PC-9 (cell line): ENCODE measurements at regions of chr13 and their contacts with region 1.

Region 1: DNA sequence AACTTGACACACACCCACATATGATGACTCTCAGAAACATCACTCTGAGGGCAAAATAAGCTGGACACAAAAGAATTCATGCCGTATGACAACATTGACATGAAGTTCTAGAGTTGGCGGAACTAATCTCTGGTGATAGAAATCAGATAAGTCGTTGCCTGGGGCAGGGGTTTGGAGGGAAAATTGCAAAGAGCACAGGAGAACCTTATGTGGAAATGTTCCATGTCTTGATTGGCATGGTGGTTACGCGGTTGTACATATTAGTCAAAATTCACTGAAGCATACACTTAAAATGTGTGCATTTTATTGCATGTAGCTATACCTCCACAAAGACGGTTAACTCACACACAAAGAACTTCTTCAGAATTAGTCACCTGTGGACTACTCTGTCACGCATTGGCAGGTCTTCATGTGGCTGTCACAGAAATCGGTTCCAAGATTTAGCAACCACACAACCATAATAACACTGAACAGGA is 137.8 kb upstream of the GJB6 start:
- DNase-seq: peak in 1 of 2 experiments; percentile 38
- H3K4me3 ChIP-seq: no peak overlapping the region; the same call in 1 of the 2 replicates
- H3K27ac ChIP-seq: peak overlapping the region; percentile 90
- H3K4me1 ChIP-seq: peaks cover 35% of the 10 kb centered on the region
- H3K27me3 ChIP-seq: no peaks in the 10 kb centered on the region
- CTCF ChIP-seq: no peak

Region 2: GRCh38 chr13:20191311-20192157 is 178.4 kb before region 1 on chr13:
- CTCF ChIA-PET with region 1: no interaction called
- POLR2A ChIA-PET with region 1: interaction called, 10 read pairs
- intact Hi-C with region 1: no loop called
- DNase-seq: peak; percentile 16 to 52
- H3K4me3 ChIP-seq: peak overlapping the region; percentile 70
- H3K27ac ChIP-seq: no peak overlapping the region
- H3K4me1 ChIP-seq: peaks cover 19% of the 10 kb centered on the region
- H3K27me3 ChIP-seq: no peaks in the 10 kb centered on the region
- CTCF ChIP-seq: no peak

Region 3: GRCh38 chr13:20197361-20197834 is 172.5 kb before region 1 on chr13:
- CTCF ChIA-PET with region 1: no interaction called
- POLR2A ChIA-PET with region 1: no interaction called
- intact Hi-C with region 1: loop called (anchors 1 kb)
- DNase-seq: peak in 1 of 2 experiments; percentile 65
- H3K4me3 ChIP-seq: no peak overlapping the region
- H3K27ac ChIP-seq: no peak overlapping the region
- H3K4me1 ChIP-seq: no peaks in the 10 kb centered on the region
- H3K27me3 ChIP-seq: no peaks in the 10 kb centered on the region
- CTCF ChIP-seq: peak; percentile 85

Region 4: GRCh38 chr13:20320885-20321284 is 49.0 kb before region 1 on chr13:
- CTCF ChIA-PET with region 1: no interaction called
- POLR2A ChIA-PET with region 1: no interaction called
- intact Hi-C with region 1: loop called (anchors 5 kb)
- DNase-seq: no peak
- H3K4me3 ChIP-seq: no peak overlapping the region
- H3K27ac ChIP-seq: no peak overlapping the region
- H3K4me1 ChIP-seq: no peaks in the 10 kb centered on the region
- H3K27me3 ChIP-seq: no peaks in the 10 kb centered on the region
- CTCF ChIP-seq: no peak

Region 5: GRCh38 chr13:20418953-20419352 is 49.0 kb after region 1 on chr13:
- CTCF ChIA-PET with region 1: no interaction called
- POLR2A ChIA-PET with region 1: interaction called, 4 read pairs
- intact Hi-C with region 1: loop called (anchors 1 kb)
- DNase-seq: no peak
- H3K4me3 ChIP-seq: no peak overlapping the region
- H3K27ac ChIP-seq: peak overlapping the region; percentile 93
- H3K4me1 ChIP-seq: peaks cover 30% of the 10 kb centered on the region
- H3K27me3 ChIP-seq: no peaks in the 10 kb centered on the region
- CTCF ChIP-seq: no peak

Region 6: DNA sequence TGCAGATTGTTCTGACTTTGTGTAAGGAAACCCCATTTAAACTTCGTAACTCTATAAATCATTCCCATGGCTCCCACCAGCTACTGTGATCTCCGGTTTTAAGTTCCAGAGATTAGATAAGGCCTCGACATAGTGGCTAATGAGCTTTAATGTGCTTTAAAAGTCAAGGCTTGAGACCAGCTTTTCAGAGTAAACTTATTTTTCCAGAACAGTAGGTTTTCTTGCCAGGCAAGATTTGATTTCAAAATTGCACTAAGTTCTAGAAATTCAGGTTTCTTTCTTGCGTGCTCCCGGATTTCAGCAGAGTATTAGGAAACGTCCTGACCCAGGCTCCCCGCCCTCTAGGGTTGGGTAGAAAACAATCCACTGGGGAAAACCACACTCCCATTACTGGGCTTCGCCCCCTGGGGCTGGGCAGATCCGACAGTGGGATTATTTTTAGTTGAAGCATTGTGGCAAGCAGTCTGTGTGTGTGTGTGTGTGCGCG is 112.4 kb after region 1 on chr13:
- CTCF ChIA-PET with region 1: interaction called, 19 read pairs
- POLR2A ChIA-PET with region 1: no interaction called
- intact Hi-C with region 1: loop called (anchors 5 kb)
- DNase-seq: peak; percentile 29 to 79
- H3K4me3 ChIP-seq: no peak overlapping the region
- H3K27ac ChIP-seq: peak overlapping the region; percentile 62
- H3K4me1 ChIP-seq: peaks cover 17% of the 10 kb centered on the region
- H3K27me3 ChIP-seq: no peaks in the 10 kb centered on the region
- CTCF ChIP-seq: no peak

Region 7: GRCh38 chr13:20489185-20489820 is 119.4 kb after region 1 on chr13:
- CTCF ChIA-PET with region 1: interaction called, 5 read pairs
- POLR2A ChIA-PET with region 1: no interaction called
- intact Hi-C with region 1: loop called (anchors 5 kb)
- DNase-seq: peak; percentile 53 to 61
- H3K4me3 ChIP-seq: no peak overlapping the region
- H3K27ac ChIP-seq: no peak overlapping the region
- H3K4me1 ChIP-seq: no peaks in the 10 kb centered on the region
- H3K27me3 ChIP-seq: no peaks in the 10 kb centered on the region
- CTCF ChIP-seq: peak; percentile 90